ENCODE measurements at regions of chr4 and their contacts with region 1.

Region 1: DNA sequence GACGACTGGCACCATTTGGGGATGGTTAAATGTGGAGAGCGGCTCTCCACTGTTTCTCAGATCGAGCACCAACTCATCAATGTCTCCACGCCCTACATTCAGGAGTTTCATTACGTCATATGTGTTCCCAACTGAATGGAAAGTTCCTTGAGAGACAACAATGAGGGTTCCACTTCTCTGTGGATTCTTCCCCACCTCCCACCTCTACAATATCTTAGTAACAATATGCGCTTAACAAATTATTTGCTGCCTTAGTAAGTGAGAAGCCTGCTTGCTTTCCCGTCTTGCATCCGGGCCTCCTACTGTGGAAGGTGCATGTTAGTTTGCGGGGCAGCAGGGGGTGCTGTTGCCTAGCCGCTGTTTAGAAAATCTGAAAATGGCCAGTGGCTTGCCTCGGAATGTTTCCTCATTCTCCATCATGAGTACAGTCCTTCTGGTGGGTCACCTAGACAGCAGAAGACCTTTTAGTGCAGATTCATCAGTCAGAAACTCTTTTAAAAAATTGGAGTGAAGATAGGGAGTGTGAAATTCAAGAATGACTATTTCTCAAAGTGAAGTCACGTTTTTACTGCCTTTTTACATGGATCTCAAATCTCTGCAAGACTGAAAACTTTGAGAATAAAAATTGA is 55.7 kb downstream of the PHOX2B start:
- DNase-seq: peak in 4 of 5 donors; percentile 18 to 63 (median 28)
- ATAC-seq: peak; percentile 42 to 82 (median 64)
- H3K4me3 ChIP-seq: no peak overlapping the region
- H3K27ac ChIP-seq: no peak overlapping the region
- H3K4me1 ChIP-seq: no peaks in the 10 kb centered on the region
- H3K27me3 ChIP-seq: no peaks in the 10 kb centered on the region
- CTCF ChIP-seq: peak; percentile 64 to 83 (median 76)
- POLR2A ChIP-seq: no peak

Region 2: GRCh38 chr4:41613386-41613785 is 79.4 kb before region 1 on chr4:
- intact Hi-C with region 1: no loop called
- DNase-seq: peak in 1 of 5 donors; percentile 30
- ATAC-seq: peak in 2 of 4 donors; percentile 41 to 46
- H3K4me3 ChIP-seq: peak overlapping the region in 9 of 12 donors; percentile 10 to 52 (median 29)
- H3K27ac ChIP-seq: peak overlapping the region; percentile 0 to 83 (median 68)
- H3K4me1 ChIP-seq: peaks cover 0 to 43% (median 32%) of the 10 kb centered on the region in 12 donors
- H3K27me3 ChIP-seq: no peaks in the 10 kb centered on the region
- CTCF ChIP-seq: no peak
- POLR2A ChIP-seq: no peak

Region 3: GRCh38 chr4:41725254-41725653 is 32.4 kb after region 1 on chr4:
- intact Hi-C with region 1: no loop called
- DNase-seq: no peak
- ATAC-seq: no peak
- H3K4me3 ChIP-seq: no peak overlapping the region
- H3K27ac ChIP-seq: no peak overlapping the region
- H3K4me1 ChIP-seq: no peaks in the 10 kb centered on the region
- H3K27me3 ChIP-seq: peaks cover 0 to 53% (median 7%) of the 10 kb centered on the region in 9 donors
- CTCF ChIP-seq: peak in 2 of 12 donors; percentile 4 to 18
- POLR2A ChIP-seq: no peak

Region 4: DNA sequence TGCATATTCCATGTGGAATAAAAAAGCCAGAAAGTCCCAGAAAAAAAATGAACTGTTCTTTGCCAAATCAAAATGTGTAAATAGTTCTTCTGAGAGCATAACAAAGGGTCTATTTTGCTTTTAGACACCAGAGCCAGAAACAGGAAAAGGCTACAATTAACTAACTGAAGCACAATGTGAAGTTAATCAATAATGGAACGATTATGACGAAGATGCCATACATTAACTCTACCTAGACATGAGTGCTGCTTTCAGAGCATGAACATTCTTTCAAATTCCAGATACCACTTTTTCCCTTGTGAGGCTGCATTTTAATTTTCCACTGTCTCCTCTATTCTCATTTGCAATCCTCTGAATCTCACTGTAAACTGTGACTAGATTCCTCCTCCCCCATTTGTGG is 104.4 kb after region 1 on chr4:
- intact Hi-C with region 1: no loop called
- DNase-seq: no peak
- ATAC-seq: no peak
- H3K4me3 ChIP-seq: no peak overlapping the region
- H3K27ac ChIP-seq: no peak overlapping the region
- H3K4me1 ChIP-seq: peaks cover 0 to 14% (median 10%) of the 10 kb centered on the region in 12 donors
- H3K27me3 ChIP-seq: peaks cover 0 to 17% (median 0%) of the 10 kb centered on the region in 9 donors
- CTCF ChIP-seq: no peak
- POLR2A ChIP-seq: no peak

Region 5: DNA sequence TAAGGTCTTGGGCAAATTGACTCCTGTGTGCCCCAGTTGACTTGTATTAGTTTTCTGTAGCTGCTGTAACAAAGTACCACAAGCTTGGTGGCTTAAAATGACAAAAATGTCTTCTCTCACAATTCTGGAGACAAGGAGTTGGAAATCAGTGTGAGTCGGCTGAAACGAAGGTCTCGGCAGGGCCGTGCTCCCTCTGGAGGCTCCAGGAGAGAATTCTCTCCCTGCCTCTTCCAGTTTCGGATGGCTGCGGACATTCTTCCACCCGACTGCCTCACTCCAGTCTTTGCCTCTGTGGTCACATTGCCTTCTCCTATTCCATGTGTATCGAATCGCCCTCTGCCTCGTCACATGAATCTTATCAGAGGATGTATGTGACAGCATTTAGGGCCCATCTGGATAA is 121.7 kb after region 1 on chr4:
- intact Hi-C with region 1: loop called in 8 of 10 experiments (anchors 2 to 10 kb)
- DNase-seq: peak in 1 of 5 donors; percentile 25
- ATAC-seq: peak in 1 of 4 donors; percentile 56
- H3K4me3 ChIP-seq: no peak overlapping the region
- H3K27ac ChIP-seq: no peak overlapping the region
- H3K4me1 ChIP-seq: no peaks in the 10 kb centered on the region
- H3K27me3 ChIP-seq: peaks cover 0 to 37% (median 3%) of the 10 kb centered on the region in 9 donors
- CTCF ChIP-seq: peak; percentile 8 to 55 (median 36)
- POLR2A ChIP-seq: no peak

Region 6: DNA sequence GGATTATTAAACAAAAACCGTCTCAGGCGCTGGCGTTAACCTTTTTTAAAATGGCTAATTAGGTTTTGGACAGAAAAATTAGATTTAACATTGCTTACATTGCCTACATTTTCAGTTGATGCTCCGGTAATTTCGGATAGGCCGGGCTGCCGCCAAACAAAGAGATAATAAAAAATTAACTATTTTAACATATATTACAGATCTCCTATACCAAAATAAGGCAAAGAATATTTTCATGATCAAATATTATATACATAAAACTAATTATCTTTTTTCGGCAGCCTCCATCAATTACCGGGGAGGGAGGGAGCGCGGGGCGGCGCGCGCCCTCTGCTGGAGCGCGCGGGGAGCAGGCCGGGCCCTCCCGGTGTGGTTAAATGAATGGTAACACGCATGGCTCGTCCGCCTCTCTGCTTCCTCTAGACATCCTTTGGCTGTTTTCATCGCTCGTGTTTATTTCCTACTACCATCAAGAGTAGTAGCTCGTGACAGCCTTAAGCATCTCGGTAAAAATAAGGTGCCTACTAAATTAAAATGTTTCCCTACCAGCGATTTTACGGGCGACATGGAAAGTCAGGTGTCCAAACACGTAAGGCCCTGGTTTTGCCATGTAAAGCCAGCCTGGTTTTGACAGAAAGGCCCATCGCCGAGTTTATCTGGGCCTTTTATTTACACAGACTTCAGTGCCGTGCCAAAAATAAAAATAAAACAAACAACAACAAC is 190.0 kb after region 1 on chr4:
- intact Hi-C with region 1: loop called in 8 of 10 experiments (anchors 1 to 5 kb)
- DNase-seq: peak in 2 of 5 donors; percentile 40 to 73
- ATAC-seq: peak; percentile 60 to 92 (median 82)
- H3K4me3 ChIP-seq: peak overlapping the region in 11 of 12 donors; percentile 10 to 53 (median 40)
- H3K27ac ChIP-seq: no peak overlapping the region
- H3K4me1 ChIP-seq: peaks cover 4 to 35% (median 22%) of the 10 kb centered on the region in 12 donors
- H3K27me3 ChIP-seq: peaks cover 32 to 75% (median 62%) of the 10 kb centered on the region in 9 donors
- CTCF ChIP-seq: peak; percentile 84 to 99 (median 94)
- POLR2A ChIP-seq: no peak

Region 7: GRCh38 chr4:41887821-41888686 is 195.2 kb after region 1 on chr4:
- intact Hi-C with region 1: loop called in 9 of 10 experiments (anchors 1 to 5 kb)
- DNase-seq: no peak
- ATAC-seq: no peak
- H3K4me3 ChIP-seq: no peak overlapping the region
- H3K27ac ChIP-seq: no peak overlapping the region
- H3K4me1 ChIP-seq: no peaks in the 10 kb centered on the region
- H3K27me3 ChIP-seq: peaks cover 0 to 45% (median 15%) of the 10 kb centered on the region in 9 donors
- CTCF ChIP-seq: peak; percentile 79 to 97 (median 90)
- POLR2A ChIP-seq: no peak